Endothelial cell of umbilical vein (primary cell): ENCODE measurements at regions of chr10 and their contacts with region 1.

Region 1: GRCh38 chr10:60282771-60283353 is 106.8 kb downstream of the ANK3 start:
- DNase-seq: peak; percentile 85
- H3K4me3 ChIP-seq: peak overlapping the region in 2 of 3 experiments; percentile 25 to 59
- H3K27ac ChIP-seq: peak overlapping the region; percentile 92
- H3K4me1 ChIP-seq: peaks cover 43% of the 10 kb centered on the region
- H3K27me3 ChIP-seq: no peaks in the 10 kb centered on the region
- CTCF ChIP-seq: no peak
- POLR2A ChIP-seq: no peak

Region 2: GRCh38 chr10:59906417-59907202 is 376.3 kb before region 1 on chr10 and contains the start of gene CCDC6:
- CTCF ChIA-PET with region 1: no interaction called
- POLR2A ChIA-PET with region 1: no interaction called
- dilution Hi-C with region 1: no loop called
- intact Hi-C with region 1: loop called (anchors 10 kb)
- DNase-seq: peak; percentile 96
- H3K4me3 ChIP-seq: peak within 1 kb of the TSS; percentile 68 to 81 (median 77)
- H3K27ac ChIP-seq: peak within 1 kb of the TSS; percentile 75
- H3K4me1 ChIP-seq: peaks cover 32% of the 10 kb centered on the region
- H3K27me3 ChIP-seq: no peaks in the 10 kb centered on the region
- CTCF ChIP-seq: peak; percentile 64 to 82
- POLR2A ChIP-seq: peak; percentile 75
- total RNA-seq, gene CCDC6: 36.8 TPM in 2 replicates

Region 3: GRCh38 chr10:60314069-60314940 is 31.4 kb after region 1 on chr10:
- CTCF ChIA-PET with region 1: interaction called, 7 read pairs
- POLR2A ChIA-PET with region 1: no interaction called
- dilution Hi-C with region 1: no loop called
- intact Hi-C with region 1: loop called (anchors 1 kb)
- DNase-seq: peak; percentile 88
- H3K4me3 ChIP-seq: peak overlapping the region in 1 of 3 experiments; percentile 8
- H3K27ac ChIP-seq: peak overlapping the region; percentile 94
- H3K4me1 ChIP-seq: peaks cover 39% of the 10 kb centered on the region
- H3K27me3 ChIP-seq: no peaks in the 10 kb centered on the region
- CTCF ChIP-seq: no peak
- POLR2A ChIP-seq: no peak

Region 4: DNA sequence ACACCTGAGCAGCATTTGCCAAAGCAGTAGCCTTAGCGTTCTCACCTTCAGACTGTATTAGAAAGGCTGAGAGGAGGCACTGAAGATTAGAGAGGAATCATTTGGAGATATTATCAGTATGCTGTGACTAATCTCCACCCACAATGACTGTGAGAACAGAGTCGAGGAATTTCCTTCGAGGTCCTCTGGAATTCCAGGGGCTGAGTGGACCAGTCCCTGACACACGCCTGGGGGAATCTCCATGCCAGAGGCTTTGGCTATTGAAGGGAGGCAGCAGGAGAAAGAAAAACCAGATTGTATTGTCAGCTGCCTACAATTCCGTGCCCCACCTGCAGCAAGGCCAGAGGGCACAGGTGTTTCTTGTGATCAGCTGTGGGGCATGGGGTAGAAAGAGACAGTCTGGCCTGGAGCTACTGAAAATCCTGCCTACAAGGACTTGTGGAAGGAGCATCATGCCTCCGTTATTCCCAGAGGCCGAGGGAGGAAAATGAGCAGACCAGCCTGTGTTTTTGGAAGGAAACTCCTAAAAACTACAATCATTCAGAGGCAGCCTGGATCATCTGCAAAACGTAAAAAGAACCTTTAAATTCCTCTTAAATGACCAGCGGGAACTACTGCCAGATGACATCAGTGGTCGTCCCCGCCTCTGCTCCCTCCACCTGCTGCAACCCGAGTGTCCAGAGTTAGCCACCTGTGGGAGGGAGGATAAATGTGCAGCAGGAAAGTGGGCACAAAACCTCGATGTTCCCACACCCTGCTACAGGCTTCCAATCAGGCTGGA is 132.1 kb after region 1 on chr10:
- CTCF ChIA-PET with region 1: no interaction called
- POLR2A ChIA-PET with region 1: no interaction called
- dilution Hi-C with region 1: no loop called
- intact Hi-C with region 1: loop called (anchors 1 kb)
- DNase-seq: peak; percentile 82
- H3K4me3 ChIP-seq: peak overlapping the region in 1 of 3 experiments; percentile 7
- H3K27ac ChIP-seq: peak overlapping the region; percentile 77
- H3K4me1 ChIP-seq: peaks cover 21% of the 10 kb centered on the region
- H3K27me3 ChIP-seq: no peaks in the 10 kb centered on the region
- CTCF ChIP-seq: no peak
- POLR2A ChIP-seq: no peak

Region 5: DNA sequence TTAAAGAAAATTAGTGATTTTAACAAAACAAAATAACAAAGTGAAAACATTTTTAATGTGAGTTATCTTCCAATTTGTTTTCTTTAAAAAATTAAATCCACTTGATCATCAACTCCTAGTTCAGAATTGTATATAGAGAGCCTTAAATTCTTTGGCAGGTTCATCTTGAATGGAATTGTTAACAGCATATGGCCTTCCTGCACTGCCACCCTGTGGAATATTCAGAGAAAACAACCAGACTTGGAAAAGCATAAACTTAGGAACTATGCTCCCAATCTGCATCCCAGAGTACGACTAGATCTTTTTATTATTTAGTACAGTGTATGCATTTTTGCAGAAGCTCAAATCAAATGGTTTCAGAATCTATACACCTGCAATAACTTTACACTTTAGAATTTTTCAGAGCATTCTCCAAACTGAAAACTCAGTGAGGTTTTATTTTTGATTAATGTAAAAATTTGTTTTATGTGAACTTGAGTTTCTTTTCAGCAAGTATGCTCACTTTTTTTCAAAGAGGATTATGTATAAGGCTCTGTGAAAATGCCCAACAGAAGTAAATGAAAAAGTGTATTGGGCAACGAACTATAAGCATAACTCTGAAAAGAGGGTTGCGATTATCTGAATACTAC is 151.7 kb after region 1 on chr10:
- CTCF ChIA-PET with region 1: interaction called, 9 read pairs
- POLR2A ChIA-PET with region 1: no interaction called
- dilution Hi-C with region 1: no loop called
- intact Hi-C with region 1: loop called (anchors 1 kb)
- DNase-seq: peak; percentile 78
- H3K4me3 ChIP-seq: no peak overlapping the region
- H3K27ac ChIP-seq: no peak overlapping the region
- H3K4me1 ChIP-seq: peaks cover 9% of the 10 kb centered on the region
- H3K27me3 ChIP-seq: no peaks in the 10 kb centered on the region
- CTCF ChIP-seq: peak; percentile 38 to 47
- POLR2A ChIP-seq: no peak

Region 6: GRCh38 chr10:60846173-60846572 is 563.3 kb after region 1 on chr10:
- CTCF ChIA-PET with region 1: no interaction called
- POLR2A ChIA-PET with region 1: no interaction called
- dilution Hi-C with region 1: no loop called
- intact Hi-C with region 1: no loop called
- DNase-seq: peak; percentile 27
- H3K4me3 ChIP-seq: no peak overlapping the region
- H3K27ac ChIP-seq: peak overlapping the region; percentile 30
- H3K4me1 ChIP-seq: peaks cover 11% of the 10 kb centered on the region
- H3K27me3 ChIP-seq: no peaks in the 10 kb centered on the region
- CTCF ChIP-seq: no peak
- POLR2A ChIP-seq: no peak